ENCODE measurements at regions of chr16 and their contacts with region 1.

Region 1: DNA sequence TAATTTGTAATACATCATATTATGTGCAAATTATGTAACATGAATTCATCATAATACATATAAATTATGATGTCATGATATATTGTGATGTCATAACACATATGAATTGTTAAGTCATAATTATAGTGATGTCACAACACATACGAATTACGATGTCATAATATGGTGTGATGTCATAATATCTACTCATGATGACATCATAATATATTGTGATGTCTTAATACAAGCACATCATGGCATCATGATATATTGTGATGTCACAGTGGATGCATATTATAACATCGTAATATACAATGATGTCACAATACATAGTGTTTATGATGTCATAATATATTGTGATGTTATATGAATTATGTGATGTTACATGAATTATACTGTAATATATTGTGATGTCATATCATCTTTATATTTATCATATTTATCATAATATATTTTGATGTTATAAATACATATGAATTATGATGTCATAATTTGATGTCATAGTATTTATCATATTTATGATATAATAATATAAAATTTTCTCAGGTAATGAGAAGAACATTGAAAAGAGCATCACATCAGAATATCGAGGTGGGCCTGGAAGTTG is 1793.0 kb downstream of the TP53TG3F start:
- DNase-seq: no peak
- ATAC-seq: no peak
- H3K4me3 ChIP-seq: no peak overlapping the region
- H3K27ac ChIP-seq: no peak overlapping the region
- H3K4me1 ChIP-seq: no peaks in the 10 kb centered on the region
- H3K27me3 ChIP-seq: no peaks in the 10 kb centered on the region
- CTCF ChIP-seq: no peak
- POLR2A ChIP-seq: no peak

Region 2: GRCh38 chr16:35319536-35320192 is 67.2 kb after region 1 on chr16:
- intact Hi-C with region 1: loop called in 1 of 10 experiments (anchors 10 kb)
- DNase-seq: no peak
- ATAC-seq: no peak
- H3K4me3 ChIP-seq: no peak overlapping the region
- H3K27ac ChIP-seq: no peak overlapping the region
- H3K4me1 ChIP-seq: no peaks in the 10 kb centered on the region
- H3K27me3 ChIP-seq: no peaks in the 10 kb centered on the region
- CTCF ChIP-seq: no peak
- POLR2A ChIP-seq: no peak

Region 3: DNA sequence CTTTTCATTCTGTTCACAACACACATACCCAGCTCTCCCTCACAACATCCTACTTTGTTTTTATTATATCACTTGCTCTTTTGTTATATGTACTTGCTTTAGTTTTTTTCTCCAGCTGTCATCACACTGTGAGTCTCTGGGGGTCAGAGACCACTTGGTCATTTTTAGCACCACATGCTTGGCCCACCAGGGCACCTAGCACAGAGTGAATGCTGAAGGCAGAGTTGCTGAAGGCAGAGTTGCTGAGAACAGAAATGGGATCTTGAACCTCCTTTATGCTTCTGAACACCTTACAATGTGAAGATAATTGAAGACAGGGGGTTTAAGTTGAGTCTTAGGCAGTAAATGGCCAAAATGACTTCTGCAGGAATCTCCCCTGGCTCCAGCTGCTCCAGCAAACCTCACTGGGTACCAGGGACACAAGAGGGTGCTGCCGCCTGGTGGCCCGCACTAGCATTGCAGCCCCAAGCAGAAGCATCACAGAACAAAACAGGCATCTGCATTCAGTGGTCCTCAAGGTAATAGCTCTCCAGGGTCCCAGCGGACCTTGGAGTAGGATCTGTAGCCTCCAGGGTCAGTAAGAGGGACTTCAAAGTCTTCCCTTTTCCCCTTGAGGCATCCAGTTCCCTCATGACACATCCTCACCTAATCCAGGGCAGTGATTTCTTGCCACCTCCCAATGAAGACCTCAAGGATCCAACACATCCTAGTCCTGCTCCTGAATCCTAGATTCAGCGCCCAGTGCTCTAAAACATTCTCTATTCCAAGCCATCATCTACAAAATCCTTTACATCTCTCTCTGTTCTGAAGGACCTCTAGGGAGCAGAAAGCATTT is 179.6 kb after region 1 on chr16:
- intact Hi-C with region 1: loop called in 1 of 10 experiments (anchors 2 kb)
- DNase-seq: no peak
- ATAC-seq: no peak
- H3K4me3 ChIP-seq: no peak overlapping the region
- H3K27ac ChIP-seq: no peak overlapping the region
- H3K4me1 ChIP-seq: no peaks in the 10 kb centered on the region
- H3K27me3 ChIP-seq: no peaks in the 10 kb centered on the region
- CTCF ChIP-seq: peak; percentile 25 to 60 (median 44)
- POLR2A ChIP-seq: no peak

Measured in heart left ventricle (tissue), 16 donors.